PC-9 (cell line): ENCODE measurements at regions of chr1 and their contacts with region 1.

Region 1: GRCh38 chr1:212608209-212608955 is at the start of gene ATF3:
- DNase-seq: peak; percentile 89 to 99
- H3K4me3 ChIP-seq: peak within 1 kb of the TSS; percentile 96
- H3K27ac ChIP-seq: peak within 1 kb of the TSS; percentile 72
- H3K4me1 ChIP-seq: peaks cover 28% of the 10 kb centered on the region
- H3K27me3 ChIP-seq: peaks cover 57% of the 10 kb centered on the region
- CTCF ChIP-seq: no peak
- total RNA-seq, gene ATF3: 10.2 and 10.8 TPM in 2 replicates

Region 2: DNA sequence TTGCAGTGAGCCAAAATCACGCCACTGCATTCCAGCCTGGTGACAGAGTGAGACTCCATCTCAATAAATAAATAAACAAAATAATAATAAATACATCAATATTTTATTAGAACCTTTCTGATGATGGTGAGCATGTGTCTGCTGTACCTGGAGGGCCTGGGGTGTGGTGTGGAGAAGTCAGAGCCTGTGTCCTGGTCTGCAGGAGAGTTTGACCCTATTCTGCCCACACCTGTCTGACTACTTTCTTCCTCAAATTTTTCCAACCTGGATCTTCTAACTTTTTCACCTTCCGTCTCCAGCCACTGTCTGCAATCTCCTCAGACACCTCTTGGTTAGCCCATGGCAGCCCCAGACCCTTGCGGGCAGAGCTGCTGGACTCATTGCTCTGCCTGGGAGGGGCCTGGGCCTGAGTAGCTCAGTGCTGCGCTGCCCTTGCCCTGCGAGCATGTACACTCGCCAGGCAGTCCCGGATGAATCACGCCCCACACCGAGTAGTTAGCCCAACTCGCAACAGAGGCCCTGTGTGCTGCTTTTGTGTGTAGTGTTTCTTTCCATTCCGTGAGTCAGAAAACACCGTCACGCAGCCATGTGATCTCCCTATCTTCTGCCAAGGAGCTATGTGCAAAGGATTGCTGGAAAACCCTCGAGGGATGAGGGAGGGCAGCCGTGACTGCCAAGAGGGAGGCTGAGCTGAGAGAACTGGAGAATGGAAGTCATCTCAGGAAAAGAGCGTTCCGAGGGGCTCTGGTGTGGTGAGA is 138.5 kb before region 1 on chr1:
- CTCF ChIA-PET with region 1: interaction called, 4 read pairs
- POLR2A ChIA-PET with region 1: interaction called, 27 read pairs
- intact Hi-C with region 1: no loop called
- DNase-seq: peak; percentile 63 to 65
- H3K4me3 ChIP-seq: no peak overlapping the region
- H3K27ac ChIP-seq: 0 out of 2 replicates have a peak overlapping the region, but pooled peaks have one; percentile 8
- H3K4me1 ChIP-seq: peaks cover 38% of the 10 kb centered on the region
- H3K27me3 ChIP-seq: no peaks in the 10 kb centered on the region
- CTCF ChIP-seq: no peak

Region 3: GRCh38 chr1:212485895-212486590 is 122.3 kb before region 1 on chr1:
- CTCF ChIA-PET with region 1: no interaction called
- POLR2A ChIA-PET with region 1: interaction called, 4 read pairs
- intact Hi-C with region 1: loop called (anchors 1 kb)
- DNase-seq: peak; percentile 95 to 100
- H3K4me3 ChIP-seq: no peak overlapping the region
- H3K27ac ChIP-seq: peak overlapping the region; percentile 81
- H3K4me1 ChIP-seq: peaks cover 74% of the 10 kb centered on the region
- H3K27me3 ChIP-seq: no peaks in the 10 kb centered on the region
- CTCF ChIP-seq: no peak

Region 4: GRCh38 chr1:212558693-212559480 is 49.5 kb before region 1 on chr1:
- CTCF ChIA-PET with region 1: no interaction called
- POLR2A ChIA-PET with region 1: interaction called, 8 read pairs
- intact Hi-C with region 1: loop called (anchors 1 kb)
- DNase-seq: peak; percentile 58 to 86
- H3K4me3 ChIP-seq: peak overlapping the region; percentile 67
- H3K27ac ChIP-seq: peak overlapping the region; percentile 63
- H3K4me1 ChIP-seq: peaks cover 23% of the 10 kb centered on the region
- H3K27me3 ChIP-seq: no peaks in the 10 kb centered on the region
- CTCF ChIP-seq: no peak

Region 5: DNA sequence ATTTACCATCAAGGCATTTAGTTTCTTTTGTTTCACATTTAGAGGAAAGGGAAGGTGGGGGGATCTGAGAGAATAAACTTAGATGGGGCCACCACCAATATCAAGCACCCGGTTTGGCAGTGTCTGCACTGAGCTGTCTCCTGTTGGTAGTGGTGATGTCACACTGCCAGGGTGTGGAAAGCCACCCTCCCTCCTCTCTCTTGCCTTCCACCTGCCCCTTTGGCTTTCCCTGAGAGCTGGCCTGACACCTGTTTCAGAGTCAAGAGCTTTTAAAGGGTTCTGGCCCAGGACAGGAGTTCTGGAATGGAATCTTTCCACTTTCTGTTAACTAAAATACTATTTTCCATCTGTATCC is 13.5 kb after region 1 on chr1:
- CTCF ChIA-PET with region 1: no interaction called
- POLR2A ChIA-PET with region 1: no interaction called
- intact Hi-C with region 1: no loop called
- DNase-seq: no peak
- H3K4me3 ChIP-seq: no peak overlapping the region
- H3K27ac ChIP-seq: no peak overlapping the region
- H3K4me1 ChIP-seq: no peaks in the 10 kb centered on the region
- H3K27me3 ChIP-seq: peaks cover 18% of the 10 kb centered on the region; the same call in 1 of the 2 replicates
- CTCF ChIP-seq: no peak

Region 6: GRCh38 chr1:212655668-212656423 is 47.5 kb after region 1 on chr1:
- CTCF ChIA-PET with region 1: no interaction called
- POLR2A ChIA-PET with region 1: interaction called, 12 read pairs
- intact Hi-C with region 1: no loop called
- DNase-seq: peak; percentile 86 to 91
- H3K4me3 ChIP-seq: no peak overlapping the region
- H3K27ac ChIP-seq: no peak overlapping the region
- H3K4me1 ChIP-seq: peaks cover 11% of the 10 kb centered on the region
- H3K27me3 ChIP-seq: peaks cover 8% of the 10 kb centered on the region; the same call in 1 of the 2 replicates
- CTCF ChIP-seq: no peak

Region 7: DNA sequence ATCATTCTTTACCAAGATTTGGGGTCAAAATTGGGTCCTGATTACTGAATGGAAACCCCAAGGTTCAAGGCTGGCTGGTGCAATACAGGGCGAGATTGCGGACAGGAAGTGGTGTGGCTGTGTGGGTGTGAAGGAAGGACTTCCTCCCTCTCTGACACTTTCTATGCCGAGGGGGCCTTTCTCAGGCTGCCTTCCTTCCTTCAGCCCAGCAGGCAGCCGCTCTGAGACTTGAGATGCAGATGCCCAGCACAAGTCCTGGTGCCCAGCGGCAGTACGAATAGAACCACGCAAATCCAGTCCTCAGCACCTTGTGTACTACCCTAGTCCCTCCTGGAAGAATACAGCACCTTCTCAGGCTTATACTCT is 75.0 kb after region 1 on chr1:
- CTCF ChIA-PET with region 1: no interaction called
- POLR2A ChIA-PET with region 1: no interaction called
- intact Hi-C with region 1: no loop called
- DNase-seq: no peak
- H3K4me3 ChIP-seq: no peak overlapping the region
- H3K27ac ChIP-seq: no peak overlapping the region
- H3K4me1 ChIP-seq: no peaks in the 10 kb centered on the region
- H3K27me3 ChIP-seq: peaks cover 23% of the 10 kb centered on the region
- CTCF ChIP-seq: no peak

Region 8: DNA sequence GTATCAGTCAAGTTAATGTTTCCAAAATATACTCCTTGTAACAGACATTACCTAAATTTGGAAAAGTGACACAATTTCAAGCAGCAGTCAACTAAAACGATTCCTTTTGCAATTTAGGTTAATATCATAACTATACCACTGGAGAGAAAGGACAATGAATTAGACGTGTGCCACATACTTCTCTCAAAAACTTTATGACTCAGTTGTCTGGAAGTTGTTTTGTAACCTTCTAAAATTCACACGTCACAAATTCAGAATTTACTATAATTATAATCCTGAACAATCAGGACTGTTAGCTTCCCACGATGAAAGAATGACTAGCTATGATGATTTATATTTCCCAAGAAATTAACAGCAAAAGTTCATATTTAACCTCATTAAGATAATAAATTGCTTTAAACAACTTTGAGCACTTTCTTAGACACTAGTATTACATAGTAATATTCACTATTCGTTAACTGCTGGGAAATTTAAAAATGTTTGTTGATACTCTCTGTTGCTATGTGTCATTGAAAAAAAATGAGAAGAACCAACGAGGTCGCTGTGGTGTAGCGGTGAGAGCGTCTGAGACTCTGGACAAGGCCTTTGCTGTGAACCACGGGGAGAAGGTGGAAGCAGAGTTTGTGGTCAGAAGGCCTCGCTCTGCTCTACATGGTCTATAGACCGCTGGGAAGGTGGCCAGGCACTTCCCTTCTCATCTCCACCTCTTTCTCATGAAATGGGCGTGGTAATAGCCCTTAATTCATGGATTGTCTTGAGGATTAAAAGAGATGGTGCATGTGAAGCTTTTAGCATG is 119.2 kb after region 1 on chr1:
- CTCF ChIA-PET with region 1: no interaction called
- POLR2A ChIA-PET with region 1: no interaction called
- intact Hi-C with region 1: no loop called
- DNase-seq: no peak
- H3K4me3 ChIP-seq: no peak overlapping the region
- H3K27ac ChIP-seq: no peak overlapping the region
- H3K4me1 ChIP-seq: no peaks in the 10 kb centered on the region
- H3K27me3 ChIP-seq: no peaks in the 10 kb centered on the region
- CTCF ChIP-seq: no peak

Region 9: GRCh38 chr1:212782422-212783154 is 174.2 kb after region 1 on chr1:
- CTCF ChIA-PET with region 1: no interaction called
- POLR2A ChIA-PET with region 1: no interaction called
- intact Hi-C with region 1: loop called (anchors 2 kb)
- DNase-seq: peak in 1 of 2 experiments; percentile 38
- H3K4me3 ChIP-seq: no peak overlapping the region
- H3K27ac ChIP-seq: no peak overlapping the region
- H3K4me1 ChIP-seq: no peaks in the 10 kb centered on the region
- H3K27me3 ChIP-seq: no peaks in the 10 kb centered on the region
- CTCF ChIP-seq: peak; percentile 81

Region 10: DNA sequence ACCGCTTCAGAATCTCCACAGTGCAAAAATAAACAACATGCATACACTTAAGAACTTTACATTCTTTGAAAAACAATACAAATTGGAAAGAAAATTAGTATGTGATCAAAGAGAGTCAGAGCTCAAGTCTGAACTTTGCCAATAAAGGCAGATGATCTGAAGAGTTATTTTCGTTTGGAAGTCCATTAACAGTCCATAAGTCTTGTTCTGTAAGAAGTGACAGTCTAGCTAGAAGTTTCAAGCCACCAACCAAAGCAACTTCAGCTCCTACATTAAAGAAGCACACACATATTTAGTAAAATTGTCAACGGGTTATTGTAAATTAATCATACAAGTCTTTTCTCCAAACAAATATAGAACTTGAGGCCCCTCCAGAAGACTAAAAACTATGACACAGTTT is 386.5 kb after region 1 on chr1:
- CTCF ChIA-PET with region 1: no interaction called
- POLR2A ChIA-PET with region 1: no interaction called
- intact Hi-C with region 1: loop called (anchors 1 kb)
- DNase-seq: no peak
- H3K4me3 ChIP-seq: no peak overlapping the region
- H3K27ac ChIP-seq: no peak overlapping the region
- H3K4me1 ChIP-seq: no peaks in the 10 kb centered on the region
- H3K27me3 ChIP-seq: no peaks in the 10 kb centered on the region
- CTCF ChIP-seq: no peak